Endothelial cell of umbilical vein (primary cell): ENCODE measurements at regions of chr20 and their contacts with region 1.

Region 1: DNA sequence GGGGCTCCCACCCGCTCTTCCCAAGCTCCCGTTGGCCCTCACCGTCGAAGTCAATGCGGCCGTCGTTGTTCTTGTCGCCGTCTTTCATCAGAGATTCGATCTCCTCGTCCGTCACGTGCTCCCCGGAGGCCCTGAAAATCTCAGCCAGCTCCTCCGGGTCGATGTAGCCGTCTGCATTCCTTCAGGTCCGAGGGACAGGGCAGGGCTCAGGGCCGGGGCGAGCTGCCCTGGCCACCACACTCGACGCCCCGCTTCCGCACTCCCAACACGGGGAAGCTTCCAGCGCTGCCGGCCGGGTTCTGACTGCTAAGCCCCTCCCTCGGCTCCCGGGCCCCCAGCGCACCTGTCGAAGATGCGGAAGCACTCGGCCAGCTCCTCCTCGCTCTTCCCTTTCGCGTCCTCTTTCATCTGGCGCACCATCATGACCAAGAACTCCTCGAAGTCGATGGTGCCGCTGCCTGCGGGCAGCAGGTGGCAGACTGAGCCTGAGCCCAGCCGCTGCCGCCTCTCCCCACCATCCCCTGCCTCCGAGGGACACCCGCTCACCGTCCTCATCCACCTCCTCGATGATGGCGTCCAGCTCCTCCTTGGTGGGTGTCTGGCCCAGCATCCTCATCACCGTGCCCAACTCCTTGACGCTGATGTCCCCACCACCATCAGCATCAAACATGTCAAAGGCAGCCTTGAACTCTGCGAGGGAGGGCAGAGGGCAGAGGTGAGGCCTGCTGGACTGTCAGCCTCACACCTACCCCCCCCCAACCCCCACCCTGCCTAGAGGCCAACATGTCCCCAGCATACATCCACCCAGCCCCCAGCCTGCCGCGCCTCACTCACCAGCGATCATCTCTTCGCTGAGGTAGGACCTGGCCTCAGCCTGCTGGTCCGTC is 2.9 kb downstream of the TNNC2 start:
- DNase-seq: peak; percentile 46
- H3K4me3 ChIP-seq: peak overlapping the region in 1 of 3 experiments; percentile 17
- H3K27ac ChIP-seq: no peak overlapping the region
- H3K4me1 ChIP-seq: peaks cover 4% of the 10 kb centered on the region
- H3K27me3 ChIP-seq: peaks cover 11 to 16% of the 10 kb centered on the region in 2 experiments
- CTCF ChIP-seq: peak; percentile 40 to 75
- POLR2A ChIP-seq: no peak

Region 2: GRCh38 chr20:45611054-45611453 is 213.1 kb before region 1 on chr20:
- CTCF ChIA-PET with region 1: no interaction called
- POLR2A ChIA-PET with region 1: no interaction called
- dilution Hi-C with region 1: no loop called
- intact Hi-C with region 1: no loop called
- DNase-seq: no peak
- H3K4me3 ChIP-seq: no peak overlapping the region
- H3K27ac ChIP-seq: no peak overlapping the region
- H3K4me1 ChIP-seq: no peaks in the 10 kb centered on the region
- H3K27me3 ChIP-seq: no peaks in the 10 kb centered on the region
- CTCF ChIP-seq: no peak
- POLR2A ChIP-seq: no peak

Region 3: DNA sequence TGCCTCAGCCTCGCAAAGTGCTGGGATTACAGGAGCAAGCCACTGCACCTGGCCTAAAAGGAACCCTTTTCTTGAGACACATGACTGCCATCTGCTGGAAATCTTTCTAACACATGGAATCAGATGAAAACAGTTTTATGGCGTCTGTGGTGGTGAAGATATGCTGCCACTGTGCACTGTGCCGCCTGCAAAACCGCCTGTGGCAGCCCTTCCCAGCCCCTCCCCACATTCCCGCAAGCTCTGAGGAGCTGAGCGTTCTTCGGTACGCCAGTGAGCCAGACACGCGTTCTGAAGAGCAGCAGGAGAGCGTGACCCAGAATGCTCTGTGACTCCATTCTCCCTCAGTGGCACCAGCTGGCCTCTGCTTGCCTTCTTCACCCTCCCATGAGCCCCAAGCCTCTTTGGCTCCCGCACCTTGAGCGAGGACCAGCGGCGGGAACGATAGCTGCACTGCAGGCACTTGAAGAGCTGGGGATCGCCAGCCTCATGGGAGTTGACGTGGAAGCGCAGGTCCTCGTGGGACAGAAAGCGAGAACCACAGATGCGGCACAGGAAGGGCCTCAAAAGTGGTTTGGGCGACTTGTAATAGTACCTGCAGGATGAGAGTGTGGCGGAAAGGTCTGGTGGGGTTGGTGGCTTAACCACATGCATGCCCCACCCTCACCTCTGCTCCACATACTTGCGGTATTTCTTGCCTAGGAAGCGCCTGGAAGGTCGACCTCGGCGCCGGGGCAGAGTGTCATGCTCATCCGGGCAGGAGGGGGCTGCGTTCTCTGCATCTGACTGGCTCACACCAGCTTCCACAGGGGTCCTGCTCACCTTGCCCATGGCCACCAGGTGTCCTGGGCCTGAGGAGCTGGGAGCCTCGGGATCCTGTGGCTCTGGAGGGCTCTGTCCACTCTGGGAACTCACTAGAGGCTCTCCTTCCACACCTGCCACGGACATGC is 139.1 kb after region 1 on chr20:
- CTCF ChIA-PET with region 1: interaction called, 41 read pairs
- POLR2A ChIA-PET with region 1: no interaction called
- dilution Hi-C with region 1: no loop called
- intact Hi-C with region 1: loop called (anchors 2 kb)
- DNase-seq: peak; percentile 36
- H3K4me3 ChIP-seq: no peak overlapping the region
- H3K27ac ChIP-seq: no peak overlapping the region
- H3K4me1 ChIP-seq: no peaks in the 10 kb centered on the region
- H3K27me3 ChIP-seq: no peaks in the 10 kb centered on the region
- CTCF ChIP-seq: peak; percentile 24 to 25
- POLR2A ChIP-seq: no peak